HCT116 (cell line): ENCODE measurements at regions of chr5 and their contacts with region 1.

Region 1: DNA sequence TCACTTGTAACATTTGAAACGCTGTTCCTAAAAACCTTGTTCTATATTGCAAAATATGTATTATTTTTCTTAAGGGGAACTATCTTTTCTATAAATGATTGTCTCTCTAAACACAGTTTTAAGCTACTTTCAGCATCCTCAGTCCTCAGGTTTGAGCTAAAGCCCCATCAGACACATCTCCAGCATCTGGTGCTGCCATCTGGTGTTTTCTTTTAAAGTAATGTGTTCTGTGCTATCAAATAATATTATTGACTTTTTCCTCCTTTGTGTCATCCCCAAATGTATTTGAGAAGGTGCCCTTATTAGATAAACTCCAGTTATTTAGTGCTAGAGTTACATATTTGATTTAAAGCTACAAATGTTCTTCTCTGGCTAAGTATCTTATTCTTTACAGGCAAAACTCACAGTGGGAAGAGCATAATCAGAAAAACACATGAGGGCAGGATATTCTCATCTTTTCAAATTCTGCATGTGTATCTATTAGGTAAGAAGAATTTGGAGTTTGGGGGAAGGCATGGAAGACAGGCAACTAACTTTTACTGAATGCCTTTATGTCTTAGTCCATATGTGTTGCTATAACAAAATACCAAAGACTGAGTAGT is 27.5 kb downstream of the ZNF474 start:
- DNase-seq: peak; percentile 18
- ATAC-seq: peak; percentile 70
- H3K4me3 ChIP-seq: no peak overlapping the region
- H3K27ac ChIP-seq: no peak overlapping the region
- H3K4me1 ChIP-seq: no peaks in the 10 kb centered on the region
- H3K27me3 ChIP-seq: no peaks in the 10 kb centered on the region
- CTCF ChIP-seq: peak; percentile 30 to 56 (median 39); a peak in 4 of 6 replicates
- POLR2A ChIP-seq: no peak
- RAD21 ChIP-seq: peak; percentile 66

Region 2: DNA sequence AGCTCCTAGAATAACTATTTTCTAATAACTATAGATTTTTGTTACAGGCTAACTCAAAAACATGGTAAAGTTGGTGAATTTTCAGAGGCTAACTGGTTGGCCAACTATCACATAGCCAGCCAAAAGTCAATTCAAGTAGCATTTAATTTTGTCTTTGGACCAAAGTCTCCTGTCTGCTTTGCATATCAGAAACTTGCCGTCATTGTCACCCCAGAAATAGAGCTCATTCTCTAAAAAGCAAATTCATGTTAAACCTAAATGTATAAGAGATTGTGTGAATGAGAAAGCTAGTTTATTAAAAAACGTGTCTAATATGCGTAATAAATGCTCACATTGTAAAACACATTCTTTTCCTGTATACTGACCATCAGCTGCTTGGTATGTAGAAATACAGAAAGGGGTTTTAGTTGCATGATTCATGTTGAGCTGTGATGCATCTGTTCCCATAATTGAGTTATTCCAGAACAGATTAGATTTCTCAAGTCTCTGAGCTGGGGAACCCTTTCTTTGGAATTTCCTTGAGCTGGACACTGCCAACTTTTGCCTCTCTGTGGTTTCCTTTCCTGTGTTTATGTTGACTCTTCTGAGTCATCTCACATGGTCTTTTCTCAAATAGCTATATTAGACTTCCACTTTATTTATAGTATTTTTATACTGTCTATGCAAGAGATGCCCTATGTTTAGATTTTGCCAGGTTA is 187.8 kb before region 1 on chr5:
- CTCF ChIA-PET with region 1: interaction called, 23 read pairs
- POLR2A ChIA-PET with region 1: no interaction called
- RAD21 ChIA-PET with region 1: interaction called in 1 of 2 experiments, 3 read pairs
- intact Hi-C with region 1: loop called (anchors 2 kb)
- DNase-seq: peak; percentile 61
- ATAC-seq: peak; percentile 67
- H3K4me3 ChIP-seq: no peak overlapping the region
- H3K27ac ChIP-seq: no peak overlapping the region; the same call in 1 of the 2 replicates
- H3K4me1 ChIP-seq: peaks cover 17 to 19% of the 10 kb centered on the region in 2 experiments
- H3K27me3 ChIP-seq: no peaks in the 10 kb centered on the region
- CTCF ChIP-seq: no peak
- POLR2A ChIP-seq: no peak
- RAD21 ChIP-seq: peak; percentile 22; the same call in 1 of the 2 replicates

Region 3: GRCh38 chr5:122091936-122092600 is 64.8 kb before region 1 on chr5:
- CTCF ChIA-PET with region 1: interaction called, 15 read pairs
- POLR2A ChIA-PET with region 1: no interaction called
- RAD21 ChIA-PET with region 1: no interaction called
- intact Hi-C with region 1: loop called (anchors 2 kb)
- DNase-seq: peak; percentile 15
- ATAC-seq: peak; percentile 66
- H3K4me3 ChIP-seq: no peak overlapping the region
- H3K27ac ChIP-seq: no peak overlapping the region
- H3K4me1 ChIP-seq: no peaks in the 10 kb centered on the region
- H3K27me3 ChIP-seq: no peaks in the 10 kb centered on the region
- CTCF ChIP-seq: peak in 2 of 3 experiments; percentile 57 to 68; a peak in 4 of 6 replicates
- POLR2A ChIP-seq: no peak
- RAD21 ChIP-seq: peak; percentile 55

Region 4: DNA sequence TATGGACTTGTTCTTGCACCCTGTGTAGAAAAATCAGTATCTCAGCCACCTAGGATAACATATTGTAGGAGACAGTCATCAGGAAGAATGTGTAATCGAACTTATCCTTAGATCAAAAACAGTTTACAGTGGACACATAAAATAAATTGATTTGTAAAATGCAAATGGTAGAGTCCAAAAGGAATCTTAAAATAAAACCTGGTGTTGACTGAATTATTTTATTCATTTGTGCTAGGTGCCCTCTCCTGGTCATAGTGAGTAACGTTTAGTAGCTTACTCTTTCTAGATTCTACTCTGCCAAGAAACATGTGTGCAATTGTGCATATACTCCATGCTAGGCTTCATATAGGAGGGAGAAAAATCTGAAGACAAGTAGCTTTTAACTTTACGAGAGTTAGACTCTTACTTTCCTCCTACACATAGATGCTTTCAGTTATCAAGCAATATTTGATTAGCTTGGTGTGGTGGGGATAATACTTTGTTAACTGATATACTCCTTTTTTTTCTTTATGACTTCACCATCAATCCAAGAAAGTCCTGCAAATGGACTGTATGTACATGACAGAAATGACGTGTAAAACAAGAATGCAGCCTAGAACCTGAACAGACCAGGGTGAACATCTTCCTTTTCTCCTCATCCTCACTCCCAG is 55.1 kb before region 1 on chr5:
- CTCF ChIA-PET with region 1: interaction called, 18 read pairs
- POLR2A ChIA-PET with region 1: no interaction called
- RAD21 ChIA-PET with region 1: no interaction called
- intact Hi-C with region 1: no loop called
- DNase-seq: peak; percentile 26
- ATAC-seq: peak; percentile 65
- H3K4me3 ChIP-seq: no peak overlapping the region
- H3K27ac ChIP-seq: no peak overlapping the region
- H3K4me1 ChIP-seq: peaks cover 10 to 13% of the 10 kb centered on the region in 2 experiments; a peak in 3 of 4 replicates
- H3K27me3 ChIP-seq: no peaks in the 10 kb centered on the region
- CTCF ChIP-seq: peak; percentile 44 to 69 (median 57); a peak in 5 of 6 replicates
- POLR2A ChIP-seq: no peak
- RAD21 ChIP-seq: peak; percentile 72